AG04450 (cell line): ENCODE measurements at regions of chr1 and their contacts with region 1.

Region 1: GRCh38 chr1:173581383-173582079 is 21.3 kb downstream of the SLC9C2 start:
- DNase-seq: no peak
- H3K4me3 ChIP-seq: no peak overlapping the region
- H3K27ac ChIP-seq: no peak overlapping the region
- H3K27me3 ChIP-seq: peaks cover 3% of the 10 kb centered on the region
- CTCF ChIP-seq: no peak

Region 2: DNA sequence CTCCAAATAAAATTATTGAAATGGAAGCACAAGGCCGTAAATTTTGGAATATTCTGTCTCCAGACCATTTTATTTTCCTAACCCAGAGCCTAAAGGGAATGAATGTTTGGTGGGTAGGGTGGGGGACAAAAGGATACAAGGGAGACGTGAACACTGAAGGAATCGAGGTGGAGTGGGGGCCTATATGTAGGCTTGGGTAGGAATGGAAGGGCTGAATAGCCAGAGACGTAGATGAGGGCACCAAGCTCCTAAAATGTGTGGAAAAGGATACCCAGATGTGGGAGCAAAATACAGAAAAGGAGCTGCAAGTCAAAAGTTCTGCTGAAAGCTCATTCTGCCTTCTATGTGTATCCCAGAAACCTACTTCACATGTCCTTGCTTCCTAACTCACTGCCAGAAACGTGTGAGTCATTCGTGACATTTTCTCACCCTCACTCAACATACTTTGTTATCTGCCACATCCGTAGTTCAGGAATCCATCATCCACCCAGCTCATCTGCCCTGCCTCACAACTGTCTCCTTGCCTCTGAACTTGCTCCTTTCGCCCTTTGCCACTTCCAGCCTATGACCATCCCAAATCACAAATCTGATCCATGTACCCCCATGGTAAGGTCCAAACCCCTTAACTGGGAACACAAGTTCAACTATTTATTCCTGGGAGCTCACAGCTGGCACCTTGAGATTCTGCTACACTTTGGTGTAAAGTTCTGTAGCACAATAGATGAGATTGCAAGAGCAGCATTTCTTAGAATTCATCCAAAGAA is 188.5 kb before region 1 on chr1:
- CTCF ChIA-PET with region 1: interaction called, 12 read pairs
- POLR2A ChIA-PET with region 1: no interaction called
- DNase-seq: peak; percentile 39
- H3K4me3 ChIP-seq: no peak overlapping the region
- H3K27ac ChIP-seq: peak overlapping the region; percentile 23
- H3K27me3 ChIP-seq: no peaks in the 10 kb centered on the region
- CTCF ChIP-seq: no peak